ENCODE measurements at regions of chr6 and their contacts with region 1.

Region 1: GRCh38 chr6:3125815-3126214 is 7.3 kb downstream of the BPHL start:
- DNase-seq: no peak
- ATAC-seq: no peak
- H3K4me3 ChIP-seq: no peak overlapping the region
- H3K27ac ChIP-seq: no peak overlapping the region
- H3K4me1 ChIP-seq: no peaks in the 10 kb centered on the region
- H3K27me3 ChIP-seq: no peaks in the 10 kb centered on the region

Region 2: DNA sequence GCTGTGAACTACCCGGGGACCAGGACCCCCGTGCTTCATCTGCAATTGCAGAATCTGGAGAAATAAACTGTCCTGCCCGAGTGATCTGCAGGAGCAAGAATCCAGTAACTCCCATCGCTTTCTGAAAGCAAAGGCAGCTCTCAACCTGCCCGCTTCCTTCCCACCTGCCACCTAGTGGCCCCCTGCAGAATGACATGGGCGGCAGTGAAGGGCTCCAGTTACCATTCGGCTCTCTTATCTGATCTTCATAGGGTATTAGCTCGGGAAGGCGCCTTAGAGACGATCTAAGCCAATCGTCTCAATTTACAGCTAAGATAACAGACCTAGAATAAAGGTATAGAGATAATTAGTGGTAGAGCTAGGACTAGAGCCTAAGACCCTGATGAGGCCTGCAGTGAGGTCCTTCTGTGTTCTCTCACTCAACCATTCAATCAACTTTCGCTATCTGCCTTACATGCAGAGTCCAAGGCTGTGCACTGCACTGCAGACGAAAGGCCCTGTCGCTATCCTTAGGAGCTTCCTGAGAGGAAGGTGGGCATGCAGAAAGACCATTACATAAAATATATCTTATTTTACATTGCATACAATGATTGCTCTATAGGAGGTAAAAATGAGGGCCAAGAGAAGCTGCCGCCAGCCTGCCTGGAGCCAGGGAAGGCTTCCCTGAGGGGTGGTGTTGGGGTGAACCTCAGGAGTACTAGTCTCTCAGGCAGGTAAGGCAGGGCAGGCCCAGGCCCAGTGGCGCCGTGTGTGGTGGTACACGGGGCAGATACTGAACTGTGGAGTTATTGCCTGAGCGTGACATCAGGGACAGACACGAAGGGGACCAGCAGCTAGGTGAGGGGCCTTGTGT is 125.9 kb after region 1 on chr6:
- intact Hi-C with region 1: loop called (anchors 2 to 10 kb)
- DNase-seq: peak; percentile 74 to 91 (median 90)
- ATAC-seq: peak; percentile 81 to 82
- H3K4me3 ChIP-seq: no peak overlapping the region
- H3K27ac ChIP-seq: no peak overlapping the region
- H3K4me1 ChIP-seq: peaks cover 3% of the 10 kb centered on the region
- H3K27me3 ChIP-seq: no peaks in the 10 kb centered on the region

Region 3: GRCh38 chr6:3258720-3259490 is 133.1 kb after region 1 on chr6 and contains the start of gene PSMG4:
- intact Hi-C with region 1: loop called in 3 of 4 experiments (anchors 2 to 10 kb)
- DNase-seq: peak; percentile 96 to 99 (median 98)
- ATAC-seq: peak; percentile 97
- H3K4me3 ChIP-seq: peak within 1 kb of the TSS; percentile 90
- H3K27ac ChIP-seq: peak within 1 kb of the TSS; percentile 6
- H3K4me1 ChIP-seq: no peaks in the 10 kb centered on the region
- H3K27me3 ChIP-seq: no peaks in the 10 kb centered on the region
- total RNA-seq, gene PSMG4: 7.9 to 10.7 (median 9.9) TPM

Region 4: GRCh38 chr6:3334555-3334954 is 208.7 kb after region 1 on chr6:
- intact Hi-C with region 1: no loop called
- DNase-seq: peak in 1 of 3 donors; percentile 76
- ATAC-seq: peak; percentile 52 to 54
- H3K4me3 ChIP-seq: no peak overlapping the region
- H3K27ac ChIP-seq: no peak overlapping the region
- H3K4me1 ChIP-seq: peaks cover 3% of the 10 kb centered on the region
- H3K27me3 ChIP-seq: no peaks in the 10 kb centered on the region

Measured in right cardiac atrium (tissue), 5 donors.